CD8-positive, alpha-beta T cell (primary cell): ENCODE measurements at regions of chr21 and their contacts with region 1.

Region 1: GRCh38 chr21:33441489-33442477 is 38.0 kb downstream of the TMEM50B start:
- DNase-seq: peak in 1 of 9 experiments; percentile 9
- ATAC-seq: no peak
- H3K4me3 ChIP-seq: no peak overlapping the region
- H3K4me3 Mint-ChIP-seq: no peak overlapping the region
- H3K27ac ChIP-seq: no peak overlapping the region
- H3K27ac Mint-ChIP-seq: peak overlapping the region; percentile 60
- H3K4me1 ChIP-seq: no peaks in the 10 kb centered on the region
- H3K4me1 Mint-ChIP-seq: peaks cover 3% of the 10 kb centered on the region
- H3K27me3 ChIP-seq: no peaks in the 10 kb centered on the region
- H3K27me3 Mint-ChIP-seq: no peaks in the 10 kb centered on the region
- CTCF ChIP-seq: no peak

Region 2: DNA sequence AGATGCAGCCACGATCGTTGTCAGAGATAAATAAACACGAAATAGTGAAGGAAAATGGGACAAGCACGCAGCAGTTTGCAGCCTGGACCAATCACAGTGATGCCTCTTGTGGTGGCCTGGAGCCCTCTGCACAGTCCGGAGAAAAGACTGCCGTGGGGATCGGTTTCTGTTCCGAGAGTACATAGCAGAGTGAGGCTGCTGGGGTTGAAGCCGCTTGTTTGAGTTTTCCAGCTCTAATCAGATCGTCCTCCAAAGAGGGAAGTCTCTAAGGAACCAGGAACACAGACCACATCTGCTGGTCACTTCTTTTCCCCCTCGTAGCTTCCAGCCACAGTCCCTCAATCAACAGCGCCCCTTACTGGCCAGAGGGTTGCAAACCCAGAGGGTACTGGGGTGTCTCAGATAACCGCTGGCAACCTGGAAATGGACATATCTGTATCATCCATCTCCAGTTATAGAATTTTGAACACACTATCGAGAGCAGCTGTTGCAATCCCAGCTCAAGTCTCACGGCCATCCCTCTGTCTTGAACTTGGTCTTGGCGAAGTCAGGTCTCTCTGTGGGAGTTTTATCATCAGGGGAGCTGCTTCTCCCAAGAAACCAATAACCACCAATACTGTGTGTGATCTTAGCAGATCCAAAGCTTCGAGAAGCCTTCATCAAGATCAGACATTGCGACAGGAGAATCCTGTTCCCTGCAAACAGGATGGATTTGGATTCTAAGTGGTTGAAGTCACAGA is 314.5 kb before region 1 on chr21:
- CTCF ChIA-PET with region 1: no interaction called
- POLR2A ChIA-PET with region 1: no interaction called
- intact Hi-C with region 1: loop called in 1 of 2 experiments (anchors 2 kb)
- DNase-seq: peak; percentile 10 to 74 (median 61)
- ATAC-seq: peak; percentile 38
- H3K4me3 ChIP-seq: peak overlapping the region; percentile 22 to 32
- H3K4me3 Mint-ChIP-seq: peak overlapping the region; percentile 74
- H3K27ac ChIP-seq: no peak overlapping the region
- H3K27ac Mint-ChIP-seq: no peak overlapping the region
- H3K4me1 ChIP-seq: no peaks in the 10 kb centered on the region
- H3K4me1 Mint-ChIP-seq: peaks cover 9% of the 10 kb centered on the region
- H3K27me3 ChIP-seq: peaks cover 0 to 3% of the 10 kb centered on the region in 2 experiments
- H3K27me3 Mint-ChIP-seq: peaks cover 26% of the 10 kb centered on the region
- CTCF ChIP-seq: peak; percentile 56

Region 3: DNA sequence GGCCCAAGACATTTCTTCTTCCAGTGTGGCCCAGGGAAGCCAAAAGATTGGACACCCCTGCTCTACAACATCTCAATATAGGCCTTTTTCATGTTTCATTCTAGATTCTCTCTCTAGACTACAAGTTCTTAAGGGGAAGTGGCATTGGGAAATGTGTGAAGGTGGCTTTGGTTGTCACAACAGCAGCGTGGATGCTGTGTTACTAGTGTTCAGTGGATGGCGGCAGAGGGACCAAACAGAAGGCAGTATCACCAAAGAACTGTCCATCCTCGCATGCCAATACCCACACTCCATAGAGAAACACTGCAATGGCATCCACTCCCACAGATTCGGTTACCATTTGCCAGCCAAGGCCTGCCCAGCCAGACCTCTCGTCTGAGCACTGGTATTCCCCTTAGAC is 236.3 kb before region 1 on chr21:
- CTCF ChIA-PET with region 1: interaction called, 23 read pairs
- POLR2A ChIA-PET with region 1: no interaction called
- intact Hi-C with region 1: no loop called
- DNase-seq: peak in 4 of 9 experiments; percentile 31 to 76 (median 52)
- ATAC-seq: peak; percentile 43
- H3K4me3 ChIP-seq: peak overlapping the region in 1 of 2 experiments; percentile 15
- H3K4me3 Mint-ChIP-seq: peak overlapping the region; percentile 67
- H3K27ac ChIP-seq: peak overlapping the region; percentile 25 to 55
- H3K27ac Mint-ChIP-seq: peak overlapping the region; percentile 84
- H3K4me1 ChIP-seq: peaks cover 53% of the 10 kb centered on the region
- H3K4me1 Mint-ChIP-seq: peaks cover 62% of the 10 kb centered on the region
- H3K27me3 ChIP-seq: no peaks in the 10 kb centered on the region
- H3K27me3 Mint-ChIP-seq: no peaks in the 10 kb centered on the region
- CTCF ChIP-seq: no peak

Region 4: DNA sequence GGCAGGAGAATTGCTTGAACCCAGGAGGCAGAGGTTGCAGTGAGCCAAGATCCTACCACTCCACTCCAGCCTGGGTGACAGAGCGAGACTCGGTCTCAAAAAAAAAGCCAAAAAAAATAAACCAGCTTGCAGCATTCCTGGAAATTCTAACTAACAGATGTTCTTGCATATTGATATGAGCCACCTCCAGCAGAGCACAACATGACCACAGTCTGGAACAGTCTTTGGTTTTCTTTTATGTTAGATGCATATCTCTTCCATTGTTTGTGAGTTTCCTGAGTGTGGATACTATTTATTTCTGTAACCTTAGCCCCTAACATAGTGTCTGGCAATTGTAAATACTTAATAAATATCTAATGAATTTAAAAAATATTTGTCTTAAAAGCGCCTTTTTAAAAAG is 93.1 kb before region 1 on chr21:
- CTCF ChIA-PET with region 1: interaction called, 16 read pairs
- POLR2A ChIA-PET with region 1: no interaction called
- intact Hi-C with region 1: loop called in 1 of 2 experiments (anchors 1 kb)
- DNase-seq: no peak
- ATAC-seq: no peak
- H3K4me3 ChIP-seq: no peak overlapping the region
- H3K4me3 Mint-ChIP-seq: no peak overlapping the region
- H3K27ac ChIP-seq: no peak overlapping the region
- H3K27ac Mint-ChIP-seq: no peak overlapping the region
- H3K4me1 ChIP-seq: peaks cover 15% of the 10 kb centered on the region
- H3K4me1 Mint-ChIP-seq: peaks cover 16% of the 10 kb centered on the region
- H3K27me3 ChIP-seq: no peaks in the 10 kb centered on the region
- H3K27me3 Mint-ChIP-seq: no peaks in the 10 kb centered on the region
- CTCF ChIP-seq: no peak

Region 5: GRCh38 chr21:33374450-33375096 is 67.2 kb before region 1 on chr21:
- CTCF ChIA-PET with region 1: interaction called, 10 read pairs
- POLR2A ChIA-PET with region 1: no interaction called
- intact Hi-C with region 1: loop called in 1 of 2 experiments (anchors 1 kb)
- DNase-seq: peak in 7 of 9 experiments; percentile 38 to 75 (median 67)
- ATAC-seq: peak; percentile 85
- H3K4me3 ChIP-seq: no peak overlapping the region
- H3K4me3 Mint-ChIP-seq: no peak overlapping the region
- H3K27ac ChIP-seq: no peak overlapping the region
- H3K27ac Mint-ChIP-seq: no peak overlapping the region
- H3K4me1 ChIP-seq: peaks cover 9% of the 10 kb centered on the region
- H3K4me1 Mint-ChIP-seq: peaks cover 12% of the 10 kb centered on the region
- H3K27me3 ChIP-seq: peaks cover 0 to 13% of the 10 kb centered on the region in 2 experiments
- H3K27me3 Mint-ChIP-seq: peaks cover 3% of the 10 kb centered on the region
- CTCF ChIP-seq: peak; percentile 66

Region 6: GRCh38 chr21:33455686-33456446 is 14.1 kb after region 1 on chr21:
- CTCF ChIA-PET with region 1: interaction called, 19 read pairs
- POLR2A ChIA-PET with region 1: no interaction called
- intact Hi-C with region 1: no loop called
- DNase-seq: no peak
- ATAC-seq: no peak
- H3K4me3 ChIP-seq: no peak overlapping the region
- H3K4me3 Mint-ChIP-seq: no peak overlapping the region
- H3K27ac ChIP-seq: no peak overlapping the region
- H3K27ac Mint-ChIP-seq: no peak overlapping the region
- H3K4me1 ChIP-seq: no peaks in the 10 kb centered on the region
- H3K4me1 Mint-ChIP-seq: no peaks in the 10 kb centered on the region
- H3K27me3 ChIP-seq: no peaks in the 10 kb centered on the region
- H3K27me3 Mint-ChIP-seq: no peaks in the 10 kb centered on the region
- CTCF ChIP-seq: no peak